CD4-positive, alpha-beta T cell (primary cell): ENCODE measurements at regions of chr16 and their contacts with region 1.

Region 1: DNA sequence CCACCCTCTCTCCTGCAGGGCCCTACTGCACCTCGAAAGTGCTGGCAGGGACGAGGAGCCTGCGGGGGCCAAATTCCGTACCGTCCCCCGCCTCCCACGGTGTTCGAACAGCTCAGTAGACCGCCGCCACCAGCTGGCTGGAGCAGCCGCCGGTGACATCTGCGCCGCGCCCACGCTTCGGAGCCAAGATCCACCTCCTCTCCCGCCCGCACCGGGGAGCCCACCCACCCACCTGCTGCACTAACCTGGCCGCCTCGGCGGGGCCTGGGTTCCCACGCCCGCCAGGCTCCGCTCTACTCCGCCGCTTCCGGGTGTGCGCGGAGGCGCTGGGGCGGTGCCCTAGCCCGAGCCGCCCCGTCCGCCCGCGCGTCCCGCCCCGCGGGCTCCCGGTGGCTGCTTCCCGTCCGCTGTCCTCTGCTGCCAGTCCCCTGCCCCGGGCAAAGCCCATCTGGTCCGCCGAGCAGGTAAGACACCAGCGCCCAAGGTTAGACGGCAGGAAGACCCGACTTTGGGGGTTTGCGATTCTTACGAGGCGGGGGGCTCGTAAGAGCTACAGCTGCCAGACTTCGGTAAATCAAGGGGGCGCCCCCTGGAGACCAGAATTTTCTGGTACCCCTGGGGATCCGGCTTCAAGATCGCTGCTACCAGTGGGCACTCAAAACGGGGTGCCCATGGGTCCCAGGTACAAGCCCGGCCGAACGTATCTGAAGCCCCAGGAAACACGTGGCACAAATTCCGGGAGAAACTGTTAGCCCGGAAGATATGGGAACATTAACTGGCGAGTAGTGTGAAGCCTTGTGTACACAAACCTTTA is at the starts of genes FBXL8 and TRADD:
- DNase-seq: peak; percentile 60 to 91 (median 74)
- ATAC-seq: peak; percentile 66
- H3K4me3 ChIP-seq: peak within 1 kb of the TSS; percentile 100
- H3K4me3 Mint-ChIP-seq: peak within 1 kb of the TSS; percentile 95
- H3K27ac ChIP-seq: peak within 1 kb of the TSS; percentile 81 to 98
- H3K27ac Mint-ChIP-seq: peak within 1 kb of the TSS; percentile 95
- H3K4me1 ChIP-seq: peaks cover 92% of the 10 kb centered on the region
- H3K4me1 Mint-ChIP-seq: peaks cover 58% of the 10 kb centered on the region
- H3K27me3 ChIP-seq: peaks cover 23 to 32% of the 10 kb centered on the region in 2 experiments
- H3K27me3 Mint-ChIP-seq: peaks cover 35% of the 10 kb centered on the region
- CTCF ChIP-seq: peak; percentile 63
- total RNA-seq, gene FBXL8: 11.5 to 11.6 TPM
- total RNA-seq, gene TRADD: 32.4 to 34.0 TPM

Region 2: GRCh38 chr16:66934153-66934838 is 225.5 kb before region 1 on chr16 and contains the start of gene CIAO2B:
- CTCF ChIA-PET with region 1: no interaction called
- POLR2A ChIA-PET with region 1: no interaction called
- intact Hi-C with region 1: no loop called
- DNase-seq: peak; percentile 79 to 94 (median 86)
- ATAC-seq: peak; percentile 89
- H3K4me3 ChIP-seq: peak within 1 kb of the TSS; percentile 100
- H3K4me3 Mint-ChIP-seq: peak within 1 kb of the TSS; percentile 98
- H3K27ac ChIP-seq: peak within 1 kb of the TSS; percentile 72 to 78
- H3K27ac Mint-ChIP-seq: peak within 1 kb of the TSS; percentile 97
- H3K4me1 ChIP-seq: peaks cover 48% of the 10 kb centered on the region
- H3K4me1 Mint-ChIP-seq: peaks cover 62% of the 10 kb centered on the region
- H3K27me3 ChIP-seq: no peaks in the 10 kb centered on the region
- H3K27me3 Mint-ChIP-seq: no peaks in the 10 kb centered on the region
- CTCF ChIP-seq: no peak
- total RNA-seq, gene CIAO2B: 58.6 to 70.4 TPM

Region 3: DNA sequence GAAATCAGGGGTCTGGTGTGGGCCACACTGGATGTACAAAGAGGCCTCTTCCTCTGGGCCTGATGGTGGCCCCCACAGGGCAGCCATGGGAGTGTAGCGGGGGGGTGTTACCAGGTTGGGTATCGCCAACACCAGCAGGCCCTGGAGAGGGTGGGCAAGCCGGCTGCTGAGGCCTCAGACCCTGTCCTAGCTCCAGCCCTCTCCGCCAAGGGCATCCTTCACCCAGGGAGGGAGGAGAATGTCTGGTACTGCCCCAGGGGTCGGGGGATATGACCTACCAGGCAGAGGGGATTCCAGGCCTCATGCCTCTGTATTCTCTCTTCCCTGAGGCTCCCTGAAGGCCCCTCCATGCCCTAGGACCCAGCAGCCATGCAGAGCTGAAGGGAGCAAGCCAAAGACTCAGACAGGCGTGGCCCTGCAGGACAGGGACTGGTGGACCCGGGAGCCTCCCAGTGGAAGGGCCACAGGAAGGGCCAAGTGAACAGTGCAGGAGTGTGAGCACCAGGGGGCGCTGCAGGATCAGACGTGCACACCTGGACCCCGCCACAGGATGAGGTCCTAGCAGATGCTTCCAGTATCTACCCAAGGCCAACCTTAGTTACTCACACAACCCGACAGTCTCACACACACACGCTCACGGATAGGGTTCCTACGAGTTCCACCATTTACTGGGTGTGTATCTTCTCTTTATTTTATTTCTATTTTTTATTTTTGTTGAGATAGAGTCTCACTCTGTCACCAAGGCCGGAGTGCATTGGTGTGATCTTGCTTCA is 182.3 kb before region 1 on chr16:
- CTCF ChIA-PET with region 1: interaction called, 13 read pairs
- POLR2A ChIA-PET with region 1: no interaction called
- intact Hi-C with region 1: loop called (anchors 1 kb)
- DNase-seq: peak; percentile 79 to 95 (median 87)
- ATAC-seq: peak; percentile 99
- H3K4me3 ChIP-seq: no peak overlapping the region
- H3K4me3 Mint-ChIP-seq: no peak overlapping the region
- H3K27ac ChIP-seq: no peak overlapping the region
- H3K27ac Mint-ChIP-seq: no peak overlapping the region
- H3K4me1 ChIP-seq: peaks cover 23% of the 10 kb centered on the region
- H3K4me1 Mint-ChIP-seq: peaks cover 5% of the 10 kb centered on the region
- H3K27me3 ChIP-seq: no peaks in the 10 kb centered on the region
- H3K27me3 Mint-ChIP-seq: peaks cover 3% of the 10 kb centered on the region
- CTCF ChIP-seq: peak; percentile 91

Region 4: GRCh38 chr16:67028555-67029248 is 131.1 kb before region 1 on chr16 and contains the start of gene CBFB:
- CTCF ChIA-PET with region 1: interaction called, 13 read pairs
- POLR2A ChIA-PET with region 1: interaction called, 27 read pairs
- intact Hi-C with region 1: loop called in 1 of 2 experiments (anchors 2 kb)
- DNase-seq: peak; percentile 87 to 98 (median 95)
- ATAC-seq: peak; percentile 85
- H3K4me3 ChIP-seq: peak within 1 kb of the TSS; percentile 64
- H3K4me3 Mint-ChIP-seq: peak within 1 kb of the TSS; percentile 92
- H3K27ac ChIP-seq: peak within 1 kb of the TSS; percentile 81 to 93
- H3K27ac Mint-ChIP-seq: peak within 1 kb of the TSS; percentile 95
- H3K4me1 ChIP-seq: peaks cover 48% of the 10 kb centered on the region
- H3K4me1 Mint-ChIP-seq: peaks cover 40% of the 10 kb centered on the region
- H3K27me3 ChIP-seq: no peaks in the 10 kb centered on the region
- H3K27me3 Mint-ChIP-seq: no peaks in the 10 kb centered on the region
- CTCF ChIP-seq: peak; percentile 16
- total RNA-seq, gene CBFB: 58.8 to 59.6 TPM

Region 5: DNA sequence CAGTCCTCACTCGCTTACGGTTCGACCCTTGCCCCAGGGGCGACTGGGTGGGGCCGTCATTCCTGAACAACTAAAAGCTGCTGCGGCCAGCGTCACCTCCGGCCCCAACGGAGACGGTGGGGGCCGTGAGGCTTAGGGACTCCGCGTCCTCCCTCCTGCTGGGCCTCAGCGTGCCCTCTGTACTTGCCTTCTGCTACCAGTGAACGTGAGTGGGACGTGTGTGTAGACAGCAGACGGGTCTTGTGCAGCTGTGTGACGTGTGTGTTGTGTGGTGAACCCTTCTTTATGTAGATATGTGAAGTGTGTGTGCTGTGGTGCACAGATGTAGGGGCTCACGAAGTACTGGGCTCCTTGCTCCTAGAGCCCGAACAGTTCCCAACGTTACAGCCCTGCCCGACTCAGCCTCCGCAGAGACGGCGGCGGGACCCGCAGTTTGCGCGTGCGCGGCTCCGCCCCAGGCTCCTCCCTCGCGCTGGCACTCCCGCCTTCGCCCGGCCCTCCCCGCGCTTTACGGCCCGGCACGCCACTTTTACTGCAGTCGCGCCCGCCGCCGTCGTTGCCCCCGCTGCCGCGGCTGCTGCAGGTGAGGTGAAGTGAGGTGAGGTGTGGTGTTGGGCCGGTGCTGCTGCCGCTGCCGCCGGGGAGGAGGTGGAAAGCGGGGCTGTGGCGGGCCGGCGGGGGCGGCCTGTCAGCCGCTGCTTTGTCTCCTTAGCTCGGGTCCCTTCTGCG is 50.2 kb before region 1 on chr16 and contains the start of gene PHAF1:
- CTCF ChIA-PET with region 1: interaction called, 8 read pairs
- POLR2A ChIA-PET with region 1: interaction called, 6 read pairs
- intact Hi-C with region 1: loop called (anchors 2 kb)
- DNase-seq: peak; percentile 92 to 98 (median 96)
- ATAC-seq: peak; percentile 88
- H3K4me3 ChIP-seq: peak within 1 kb of the TSS; percentile 88
- H3K4me3 Mint-ChIP-seq: peak within 1 kb of the TSS; percentile 96
- H3K27ac ChIP-seq: peak within 1 kb of the TSS; percentile 26 to 29
- H3K27ac Mint-ChIP-seq: peak within 1 kb of the TSS; percentile 84
- H3K4me1 ChIP-seq: peaks cover 24% of the 10 kb centered on the region
- H3K4me1 Mint-ChIP-seq: peaks cover 26% of the 10 kb centered on the region
- H3K27me3 ChIP-seq: no peaks in the 10 kb centered on the region
- H3K27me3 Mint-ChIP-seq: no peaks in the 10 kb centered on the region
- CTCF ChIP-seq: no peak
- total RNA-seq, gene PHAF1: 10.6 to 10.8 TPM

Region 6: GRCh38 chr16:67183627-67184328 is 24.0 kb after region 1 on chr16 and contains the start of gene MATCAP1:
- CTCF ChIA-PET with region 1: interaction called, 20 read pairs
- POLR2A ChIA-PET with region 1: interaction called, 51 read pairs
- intact Hi-C with region 1: loop called (anchors 1 to 2 kb)
- DNase-seq: peak; percentile 83 to 98 (median 89)
- ATAC-seq: peak; percentile 94
- H3K4me3 ChIP-seq: peak within 1 kb of the TSS; percentile 86
- H3K4me3 Mint-ChIP-seq: peak within 1 kb of the TSS; percentile 94
- H3K27ac ChIP-seq: peak within 1 kb of the TSS; percentile 87 to 89
- H3K27ac Mint-ChIP-seq: peak within 1 kb of the TSS; percentile 90
- H3K4me1 ChIP-seq: peaks cover 27% of the 10 kb centered on the region
- H3K4me1 Mint-ChIP-seq: peaks cover 16% of the 10 kb centered on the region
- H3K27me3 ChIP-seq: peaks cover 0 to 6% of the 10 kb centered on the region in 2 experiments
- H3K27me3 Mint-ChIP-seq: peaks cover 4% of the 10 kb centered on the region
- CTCF ChIP-seq: no peak
- total RNA-seq, gene MATCAP1: 9.7 to 10.6 TPM

Region 7: DNA sequence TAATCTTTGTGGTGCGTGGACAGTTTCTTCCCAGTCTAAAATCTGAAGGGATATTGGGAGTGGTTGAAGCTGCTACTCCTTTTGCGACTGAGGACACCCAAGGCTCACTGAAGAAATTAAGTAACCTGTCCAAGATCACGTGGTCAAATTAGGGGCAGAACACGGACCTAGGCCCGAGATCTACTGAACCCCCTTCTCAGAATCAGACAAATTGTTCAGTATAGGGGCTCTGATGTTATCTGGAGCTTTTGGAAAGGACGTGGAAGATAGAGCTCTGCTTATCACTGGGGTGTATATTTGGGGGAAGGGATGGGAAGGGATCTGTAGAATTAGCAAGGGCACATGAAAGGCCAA is 1684.4 kb after region 1 on chr16:
- CTCF ChIA-PET with region 1: no interaction called
- POLR2A ChIA-PET with region 1: no interaction called
- intact Hi-C with region 1: no loop called
- DNase-seq: no peak
- ATAC-seq: no peak
- H3K4me3 ChIP-seq: peak overlapping the region; percentile 82
- H3K4me3 Mint-ChIP-seq: peak overlapping the region; percentile 94
- H3K27ac ChIP-seq: no peak overlapping the region
- H3K27ac Mint-ChIP-seq: peak overlapping the region; percentile 60
- H3K4me1 ChIP-seq: peaks cover 28% of the 10 kb centered on the region
- H3K4me1 Mint-ChIP-seq: peaks cover 31% of the 10 kb centered on the region
- H3K27me3 ChIP-seq: no peaks in the 10 kb centered on the region
- H3K27me3 Mint-ChIP-seq: no peaks in the 10 kb centered on the region
- CTCF ChIP-seq: no peak